ENCODE measurements at regions of chr1 and their contacts with region 1.

Region 1: DNA sequence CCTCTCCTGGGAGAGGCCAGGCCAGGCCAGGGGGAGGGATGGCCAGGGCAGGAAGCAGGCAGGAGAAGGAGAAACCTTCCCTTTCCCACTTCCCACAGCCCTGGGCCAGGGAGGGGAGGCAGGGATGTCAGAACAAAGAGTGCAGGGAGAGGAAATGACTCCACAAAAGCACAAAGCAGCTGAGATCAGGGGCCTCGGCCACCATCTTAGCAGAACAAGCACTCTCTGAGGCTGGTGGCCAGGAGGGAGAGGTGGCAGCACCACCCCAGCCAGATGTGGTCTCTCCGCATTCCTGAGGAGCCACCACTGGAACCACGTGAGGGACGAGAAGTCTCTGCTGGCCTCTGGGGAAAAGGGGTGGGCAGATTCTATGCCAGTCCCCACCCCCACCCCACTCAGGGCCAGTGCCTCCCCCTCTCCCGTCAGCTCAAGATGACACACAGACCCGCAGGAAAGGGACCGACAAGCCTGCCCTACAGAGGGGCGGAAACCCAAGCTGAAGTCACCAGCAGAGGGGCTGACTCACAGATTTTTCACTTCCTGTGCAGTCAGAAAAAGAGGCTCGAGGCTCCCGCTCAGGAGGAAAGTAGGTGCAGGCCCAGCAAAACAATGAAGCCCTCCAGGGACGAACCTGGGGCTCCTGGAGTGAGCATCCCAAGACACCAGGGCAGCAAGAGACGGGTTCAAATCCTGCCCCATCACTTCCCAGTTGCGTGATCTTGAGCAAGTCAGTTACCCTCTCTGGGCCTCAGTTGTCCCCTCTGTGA is 24.1 kb upstream of the ALDH4A1 start:
- DNase-seq: peak; percentile 96
- ATAC-seq: peak; percentile 89
- H3K4me3 Mint-ChIP-seq: peak overlapping the region; percentile 77
- H3K27ac Mint-ChIP-seq: peak overlapping the region; percentile 99
- H3K4me1 Mint-ChIP-seq: peaks cover 66% of the 10 kb centered on the region
- H3K27me3 Mint-ChIP-seq: no peaks in the 10 kb centered on the region

Region 2: GRCh38 chr1:18949686-18950400 is 23.3 kb after region 1 on chr1:
- CTCF ChIA-PET with region 1: interaction called, 43 read pairs
- DNase-seq: no peak
- ATAC-seq: no peak
- H3K4me3 Mint-ChIP-seq: peak overlapping the region; percentile 47
- H3K27ac Mint-ChIP-seq: peak overlapping the region; percentile 94
- H3K4me1 Mint-ChIP-seq: peaks cover 86% of the 10 kb centered on the region
- H3K27me3 Mint-ChIP-seq: peaks cover 17% of the 10 kb centered on the region

Region 3: GRCh38 chr1:18956369-18957135 is 30.1 kb after region 1 on chr1 and contains the start of gene IFFO2:
- CTCF ChIA-PET with region 1: interaction called, 43 read pairs
- DNase-seq: peak; percentile 97
- ATAC-seq: peak; percentile 81
- H3K4me3 Mint-ChIP-seq: peak within 1 kb of the TSS; percentile 78
- H3K27ac Mint-ChIP-seq: peak within 1 kb of the TSS; percentile 57
- H3K4me1 Mint-ChIP-seq: peaks cover 50% of the 10 kb centered on the region
- H3K27me3 Mint-ChIP-seq: peaks cover 43% of the 10 kb centered on the region
- total RNA-seq, gene IFFO2: 12.5 to 13.7 TPM

Measured in activated CD8-positive, alpha-beta memory T cell treated with anti-CD3 and anti-CD28 coated beads, Interleukin-2, amount 10 ng/mL, durations not matched to agents 7 days and 5 days (primary cell).